Heart left ventricle (tissue), 16 donors: ENCODE measurements at regions of chr15 and their contacts with region 1.

Region 1: DNA sequence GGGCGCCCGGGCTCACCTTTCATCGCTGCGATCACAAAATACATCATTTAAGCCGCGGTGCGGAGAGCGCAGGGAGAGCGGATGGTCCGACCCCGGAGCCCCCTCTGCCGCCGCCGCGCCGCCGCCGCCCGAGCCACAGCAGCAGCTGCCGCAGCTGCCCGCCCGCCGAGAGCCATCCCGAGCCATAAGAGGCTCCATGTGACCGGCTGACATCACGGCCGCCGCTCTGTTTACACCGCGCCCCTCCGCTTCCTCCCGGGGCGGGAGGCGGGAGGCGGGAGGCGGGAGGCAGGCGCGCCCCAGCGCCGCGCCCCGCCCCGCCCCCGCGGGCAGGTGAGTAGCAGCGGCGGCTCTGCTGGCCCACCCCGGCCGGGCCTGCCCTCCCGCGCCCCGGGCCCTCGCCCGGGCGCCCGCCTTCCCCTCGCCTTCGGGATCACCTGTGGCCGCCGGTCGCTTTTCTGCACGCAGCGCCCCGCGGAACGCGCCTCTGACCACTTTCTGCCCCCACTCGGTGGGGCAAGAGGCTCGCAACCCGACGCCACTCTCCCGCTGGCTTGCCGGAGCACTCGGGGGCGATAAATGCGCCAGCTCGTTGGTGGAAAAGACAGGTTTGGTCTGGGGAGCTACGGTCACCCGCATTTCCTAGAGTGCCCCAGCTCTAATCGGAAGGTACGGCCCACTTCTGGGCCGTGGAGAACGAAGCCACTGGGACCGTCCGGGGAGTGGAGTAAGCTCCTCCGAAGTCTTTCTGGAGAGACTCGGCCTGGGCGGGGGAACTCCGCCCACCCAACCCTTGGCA is 113.6 kb upstream of the ICE2 start:
- DNase-seq: peak; percentile 89 to 92 (median 90)
- ATAC-seq: peak; percentile 92 to 95 (median 94)
- H3K4me3 ChIP-seq: peak overlapping the region; percentile 68 to 95 (median 86)
- H3K27ac ChIP-seq: peak overlapping the region; percentile 85 to 95 (median 92)
- H3K4me1 ChIP-seq: peaks cover 0 to 30% (median 11%) of the 10 kb centered on the region in 12 donors
- H3K27me3 ChIP-seq: peaks cover 0 to 9% (median 0%) of the 10 kb centered on the region in 9 donors
- CTCF ChIP-seq: peak in 2 of 12 donors; percentile 10 to 38
- POLR2A ChIP-seq: peak in 1 of 2 donors; percentile 76

Region 2: GRCh38 chr15:60649845-60650548 is 57.4 kb after region 1 on chr15:
- intact Hi-C with region 1: no loop called
- DNase-seq: no peak
- ATAC-seq: no peak
- H3K4me3 ChIP-seq: no peak overlapping the region
- H3K27ac ChIP-seq: peak overlapping the region in 1 of 12 donors; percentile 24
- H3K4me1 ChIP-seq: peaks cover 0 to 6% (median 0%) of the 10 kb centered on the region in 12 donors
- H3K27me3 ChIP-seq: no peaks in the 10 kb centered on the region
- CTCF ChIP-seq: no peak
- POLR2A ChIP-seq: no peak

Region 3: DNA sequence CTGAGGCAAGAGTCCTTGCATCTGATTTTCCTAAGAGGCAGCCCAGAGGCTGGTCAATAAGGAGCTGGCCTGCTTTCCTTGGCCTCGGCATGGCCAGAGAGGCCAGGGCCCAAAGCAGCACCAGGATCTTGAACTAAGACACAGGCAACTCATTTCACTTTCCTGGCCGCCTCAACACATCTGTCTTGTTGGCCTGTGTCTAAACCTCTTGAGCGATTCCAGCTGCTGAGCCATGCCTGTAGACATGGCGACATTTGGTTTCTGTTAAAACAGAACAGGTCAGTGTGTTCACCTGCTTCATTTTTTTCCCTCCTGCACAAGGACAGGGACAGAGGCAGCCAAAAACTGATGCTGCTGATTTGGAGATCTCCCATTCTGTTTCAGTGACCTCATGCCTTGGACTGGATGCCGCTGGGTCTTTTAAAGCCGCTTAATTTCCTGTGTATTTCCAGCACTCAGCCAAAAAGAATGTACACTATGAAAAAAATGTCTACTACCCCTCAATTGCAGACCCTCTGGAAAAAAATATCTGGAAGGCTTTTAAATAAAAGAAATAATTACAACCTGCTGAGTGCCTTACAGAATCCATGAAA is 153.0 kb after region 1 on chr15:
- intact Hi-C with region 1: loop called in 1 of 10 experiments (anchors 5 kb)
- DNase-seq: peak; percentile 43 to 76 (median 65)
- ATAC-seq: peak; percentile 81 to 95 (median 90)
- H3K4me3 ChIP-seq: peak overlapping the region in 3 of 12 donors; percentile 13 to 34 (median 19)
- H3K27ac ChIP-seq: peak overlapping the region; percentile 21 to 90 (median 58)
- H3K4me1 ChIP-seq: peaks cover 0 to 10% (median 0%) of the 10 kb centered on the region in 12 donors
- H3K27me3 ChIP-seq: no peaks in the 10 kb centered on the region
- CTCF ChIP-seq: no peak
- POLR2A ChIP-seq: no peak

Region 4: DNA sequence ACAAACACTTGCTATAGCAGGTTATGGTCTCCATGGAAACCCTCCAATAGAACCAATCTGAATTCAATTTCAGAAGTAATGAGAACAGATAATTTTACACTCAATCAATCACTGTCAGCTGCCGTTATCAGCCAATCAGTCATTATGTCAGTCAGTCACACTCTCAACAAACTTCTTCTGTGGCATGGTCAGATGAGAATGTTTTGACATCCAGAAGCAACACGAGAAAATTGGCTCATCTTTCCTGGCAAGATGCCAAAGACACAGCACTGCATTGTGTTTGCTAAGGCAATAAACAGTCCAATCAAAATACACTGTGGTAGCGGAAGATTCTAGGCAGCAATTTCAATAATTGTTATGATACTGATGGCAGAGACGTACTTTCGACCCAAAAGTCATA is 445.8 kb after region 1 on chr15:
- intact Hi-C with region 1: loop called in 1 of 10 experiments (anchors 5 kb)
- DNase-seq: no peak
- ATAC-seq: peak in 1 of 4 donors; percentile 32
- H3K4me3 ChIP-seq: no peak overlapping the region
- H3K27ac ChIP-seq: peak overlapping the region in 2 of 12 donors; percentile 7 to 9
- H3K4me1 ChIP-seq: peaks cover 4 to 57% (median 22%) of the 10 kb centered on the region in 12 donors
- H3K27me3 ChIP-seq: no peaks in the 10 kb centered on the region
- CTCF ChIP-seq: no peak
- POLR2A ChIP-seq: no peak

Region 5: DNA sequence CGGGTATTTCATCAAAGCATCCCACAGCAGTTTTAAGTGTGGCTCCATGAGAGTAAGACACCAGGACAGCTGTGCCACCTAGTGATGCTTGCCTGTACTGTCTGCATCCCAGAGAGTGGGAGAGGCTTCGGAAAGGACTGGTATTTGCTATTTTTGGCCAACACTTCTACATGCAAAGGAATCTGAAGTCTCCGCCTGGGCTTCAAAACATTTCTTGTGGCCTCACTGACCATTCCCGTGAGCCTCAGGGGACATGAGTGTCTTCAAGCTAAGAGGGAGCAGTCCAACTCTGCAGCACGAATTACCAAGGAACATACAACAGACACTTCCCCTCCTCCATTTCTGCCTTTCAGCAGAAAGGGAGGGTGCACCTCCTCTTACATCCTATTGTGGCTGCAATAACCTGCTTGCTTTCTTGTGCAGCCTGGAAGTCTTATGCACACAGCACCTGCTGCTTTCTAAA is 459.0 kb after region 1 on chr15:
- intact Hi-C with region 1: loop called in 8 of 10 experiments (anchors 5 to 10 kb)
- DNase-seq: peak in 4 of 5 donors; percentile 37 to 44 (median 43)
- ATAC-seq: peak; percentile 79 to 92 (median 91)
- H3K4me3 ChIP-seq: no peak overlapping the region
- H3K27ac ChIP-seq: no peak overlapping the region
- H3K4me1 ChIP-seq: peaks cover 0 to 12% (median 4%) of the 10 kb centered on the region in 12 donors
- H3K27me3 ChIP-seq: no peaks in the 10 kb centered on the region
- CTCF ChIP-seq: peak; percentile 31 to 76 (median 64)
- POLR2A ChIP-seq: no peak

Region 6: GRCh38 chr15:61227269-61227949 is 634.8 kb after region 1 on chr15:
- intact Hi-C with region 1: loop called in 1 of 10 experiments (anchors 5 kb)
- DNase-seq: peak in 3 of 5 donors; percentile 21 to 26 (median 25)
- ATAC-seq: peak; percentile 19 to 62 (median 29)
- H3K4me3 ChIP-seq: peak overlapping the region; percentile 53 to 95 (median 70)
- H3K27ac ChIP-seq: peak overlapping the region in 6 of 12 donors; percentile 9 to 65 (median 50)
- H3K4me1 ChIP-seq: peaks cover 0 to 24% (median 7%) of the 10 kb centered on the region in 12 donors
- H3K27me3 ChIP-seq: peaks cover 0 to 47% (median 0%) of the 10 kb centered on the region in 9 donors
- CTCF ChIP-seq: no peak
- POLR2A ChIP-seq: no peak